KBM-7 (cell line): ENCODE measurements at regions of chr12 and their contacts with region 1.

Region 1: GRCh38 chr12:106136263-106136662 is 2.5 kb downstream of the NUAK1 start:
- DNase-seq: peak; percentile 75

Region 2: GRCh38 chr12:105420659-105421240 is 715.5 kb before region 1 on chr12:
- in situ Hi-C with region 1: loop called (anchors 25 kb)
- DNase-seq: peak; percentile 61